Ascending aorta (tissue), 2 donors: ENCODE measurements at regions of chr10 and their contacts with region 1.

Region 1: GRCh38 chr10:22436884-22437619 is 91.8 kb downstream of the SPAG6 start:
- DNase-seq: peak; percentile 43 to 94
- H3K4me3 ChIP-seq: peak overlapping the region; percentile 72 to 78
- H3K27ac ChIP-seq: peak overlapping the region; percentile 92 to 97
- H3K4me1 ChIP-seq: peaks cover 0 to 15% of the 10 kb centered on the region in 2 donors
- H3K27me3 ChIP-seq: no peaks in the 10 kb centered on the region
- CTCF ChIP-seq: peak in 1 of 3 experiments; percentile 19

Region 2: DNA sequence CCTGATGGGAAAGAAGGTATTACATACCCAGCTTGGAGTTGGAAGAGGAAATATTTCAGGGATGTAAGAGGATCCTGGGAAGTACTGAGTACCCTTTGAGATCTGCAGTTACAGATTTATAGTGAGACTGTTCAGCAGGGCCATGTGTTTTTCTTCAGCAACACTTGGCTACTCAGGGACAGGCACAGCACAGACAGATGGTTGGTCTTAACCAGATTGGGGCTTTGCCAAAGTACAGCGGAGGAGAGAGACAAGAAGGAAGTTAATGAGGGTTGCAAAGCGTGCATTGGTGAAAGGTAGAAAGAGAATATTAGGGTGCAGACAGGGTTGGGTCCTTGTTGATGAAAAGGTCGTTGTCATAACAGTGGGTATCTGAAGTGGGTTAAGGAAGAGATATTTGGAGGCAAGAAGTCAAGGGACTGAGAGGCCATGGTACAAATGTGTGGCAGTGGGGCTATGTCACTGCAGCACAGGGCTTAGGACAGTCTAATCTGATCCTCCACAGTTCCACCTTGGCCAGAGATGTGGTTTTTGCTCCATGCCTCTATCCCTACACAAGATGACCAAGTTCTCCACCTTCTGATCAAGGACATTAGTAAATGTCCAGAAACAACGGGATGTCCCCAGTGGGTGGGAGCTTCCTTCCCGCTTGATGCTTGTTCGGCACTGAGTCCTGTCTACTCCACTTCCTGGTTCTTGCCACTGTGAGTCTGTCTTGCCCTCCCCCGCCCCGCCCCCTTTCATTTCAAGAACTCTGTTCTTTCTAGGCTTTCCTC is 414.6 kb before region 1 on chr10:
- intact Hi-C with region 1: no loop called
- DNase-seq: no peak
- H3K4me3 ChIP-seq: no peak overlapping the region
- H3K27ac ChIP-seq: no peak overlapping the region
- H3K4me1 ChIP-seq: no peaks in the 10 kb centered on the region
- H3K27me3 ChIP-seq: no peaks in the 10 kb centered on the region
- CTCF ChIP-seq: no peak

Region 3: GRCh38 chr10:22228943-22229801 is 207.9 kb before region 1 on chr10:
- intact Hi-C with region 1: loop called (anchors 2 kb)
- DNase-seq: peak; percentile 41 to 92
- H3K4me3 ChIP-seq: peak overlapping the region; percentile 63 to 70
- H3K27ac ChIP-seq: peak overlapping the region; percentile 80 to 85
- H3K4me1 ChIP-seq: peaks cover 0 to 3% of the 10 kb centered on the region in 2 donors
- H3K27me3 ChIP-seq: no peaks in the 10 kb centered on the region
- CTCF ChIP-seq: no peak

Region 4: GRCh38 chr10:22251751-22252223 is 185.3 kb before region 1 on chr10:
- intact Hi-C with region 1: loop called (anchors 5 kb)
- DNase-seq: peak in 1 of 2 donors; percentile 81
- H3K4me3 ChIP-seq: peak overlapping the region; percentile 81 to 93
- H3K27ac ChIP-seq: peak overlapping the region; percentile 98
- H3K4me1 ChIP-seq: no peaks in the 10 kb centered on the region
- H3K27me3 ChIP-seq: no peaks in the 10 kb centered on the region
- CTCF ChIP-seq: no peak

Region 5: GRCh38 chr10:22340362-22341189 is 96.5 kb before region 1 on chr10:
- intact Hi-C with region 1: loop called (anchors 2 kb)
- DNase-seq: peak in 1 of 2 donors; percentile 84
- H3K4me3 ChIP-seq: peak overlapping the region; percentile 85 to 99
- H3K27ac ChIP-seq: peak overlapping the region; percentile 94 to 99
- H3K4me1 ChIP-seq: peaks cover 3 to 21% of the 10 kb centered on the region in 2 donors
- H3K27me3 ChIP-seq: peaks cover 62% of the 10 kb centered on the region
- CTCF ChIP-seq: no peak

Region 6: DNA sequence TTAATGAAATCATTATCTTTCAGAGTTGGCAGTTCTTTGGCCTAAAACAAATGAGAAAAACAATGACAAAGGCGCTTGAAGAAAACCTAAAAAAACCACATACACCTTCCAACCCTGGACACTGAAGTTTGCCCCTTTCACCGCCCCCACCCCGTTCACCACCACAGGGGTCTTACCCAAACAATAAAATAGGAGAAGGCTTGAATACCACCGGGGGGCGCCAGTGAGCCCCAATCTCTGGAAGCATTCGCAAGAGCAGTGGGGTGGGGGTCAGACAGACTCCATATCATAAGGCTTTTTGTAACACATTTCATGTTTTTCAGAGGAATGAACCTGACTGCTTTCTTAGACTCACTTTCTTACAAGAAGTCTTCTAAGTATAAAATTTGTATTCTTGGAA is 113.7 kb after region 1 on chr10:
- intact Hi-C with region 1: loop called (anchors 5 kb)
- DNase-seq: peak in 1 of 2 donors; percentile 67
- H3K4me3 ChIP-seq: no peak overlapping the region
- H3K27ac ChIP-seq: no peak overlapping the region
- H3K4me1 ChIP-seq: no peaks in the 10 kb centered on the region
- H3K27me3 ChIP-seq: no peaks in the 10 kb centered on the region
- CTCF ChIP-seq: peak in 2 of 3 experiments; percentile 46 to 59

Region 7: GRCh38 chr10:22849077-22849805 is 412.2 kb after region 1 on chr10:
- intact Hi-C with region 1: loop called (anchors 10 kb)
- DNase-seq: peak; percentile 70 to 93
- H3K4me3 ChIP-seq: peak overlapping the region; percentile 25 to 38
- H3K27ac ChIP-seq: peak overlapping the region; percentile 87 to 96
- H3K4me1 ChIP-seq: peaks cover 3 to 34% of the 10 kb centered on the region in 2 donors
- H3K27me3 ChIP-seq: no peaks in the 10 kb centered on the region
- CTCF ChIP-seq: no peak

Region 8: GRCh38 chr10:23067939-23068775 is 631.1 kb after region 1 on chr10:
- intact Hi-C with region 1: loop called (anchors 10 kb)
- DNase-seq: peak in 1 of 2 donors; percentile 93
- H3K4me3 ChIP-seq: no peak overlapping the region
- H3K27ac ChIP-seq: peak overlapping the region; percentile 28 to 33
- H3K4me1 ChIP-seq: peaks cover 5 to 12% of the 10 kb centered on the region in 2 donors
- H3K27me3 ChIP-seq: no peaks in the 10 kb centered on the region
- CTCF ChIP-seq: peak; percentile 44 to 87 (median 86)